Panc1 (cell line): ENCODE measurements at regions of chr16 and their contacts with region 1.

Region 1: GRCh38 chr16:11407047-11407982 is 62.1 kb downstream of the RMI2 start:
- DNase-seq: peak; percentile 72
- ATAC-seq: peak; percentile 81
- H3K4me3 ChIP-seq: no peak overlapping the region
- H3K27ac ChIP-seq: no peak overlapping the region
- H3K4me1 ChIP-seq: no peaks in the 10 kb centered on the region
- H3K27me3 ChIP-seq: no peaks in the 10 kb centered on the region
- CTCF ChIP-seq: peak; percentile 85

Region 2: GRCh38 chr16:11094857-11095565 is 312.3 kb before region 1 on chr16:
- CTCF ChIA-PET with region 1: interaction called, 18 read pairs
- POLR2A ChIA-PET with region 1: no interaction called
- in situ Hi-C with region 1: no loop called
- intact Hi-C with region 1: no loop called
- DNase-seq: no peak
- ATAC-seq: no peak
- H3K4me3 ChIP-seq: no peak overlapping the region
- H3K27ac ChIP-seq: no peak overlapping the region
- H3K4me1 ChIP-seq: 0 out of 2 replicates have a peak, but pooled peaks cover 5% of the 10 kb centered on the region
- H3K27me3 ChIP-seq: no peaks in the 10 kb centered on the region
- CTCF ChIP-seq: no peak

Region 3: GRCh38 chr16:11205754-11206581 is 201.3 kb before region 1 on chr16:
- CTCF ChIA-PET with region 1: no interaction called
- POLR2A ChIA-PET with region 1: no interaction called
- in situ Hi-C with region 1: no loop called
- intact Hi-C with region 1: no loop called
- DNase-seq: no peak
- ATAC-seq: no peak; the same call in 1 of the 2 replicates
- H3K4me3 ChIP-seq: no peak overlapping the region
- H3K27ac ChIP-seq: no peak overlapping the region
- H3K4me1 ChIP-seq: peaks cover 22% of the 10 kb centered on the region
- H3K27me3 ChIP-seq: no peaks in the 10 kb centered on the region
- CTCF ChIP-seq: no peak

Region 4: GRCh38 chr16:11535471-11535870 is 128.2 kb after region 1 on chr16:
- CTCF ChIA-PET with region 1: interaction called, 3 read pairs
- POLR2A ChIA-PET with region 1: no interaction called
- in situ Hi-C with region 1: no loop called
- intact Hi-C with region 1: loop called (anchors 5 kb)
- DNase-seq: no peak
- ATAC-seq: no peak
- H3K4me3 ChIP-seq: no peak overlapping the region
- H3K27ac ChIP-seq: no peak overlapping the region
- H3K4me1 ChIP-seq: no peaks in the 10 kb centered on the region
- H3K27me3 ChIP-seq: no peaks in the 10 kb centered on the region
- CTCF ChIP-seq: no peak

Region 5: DNA sequence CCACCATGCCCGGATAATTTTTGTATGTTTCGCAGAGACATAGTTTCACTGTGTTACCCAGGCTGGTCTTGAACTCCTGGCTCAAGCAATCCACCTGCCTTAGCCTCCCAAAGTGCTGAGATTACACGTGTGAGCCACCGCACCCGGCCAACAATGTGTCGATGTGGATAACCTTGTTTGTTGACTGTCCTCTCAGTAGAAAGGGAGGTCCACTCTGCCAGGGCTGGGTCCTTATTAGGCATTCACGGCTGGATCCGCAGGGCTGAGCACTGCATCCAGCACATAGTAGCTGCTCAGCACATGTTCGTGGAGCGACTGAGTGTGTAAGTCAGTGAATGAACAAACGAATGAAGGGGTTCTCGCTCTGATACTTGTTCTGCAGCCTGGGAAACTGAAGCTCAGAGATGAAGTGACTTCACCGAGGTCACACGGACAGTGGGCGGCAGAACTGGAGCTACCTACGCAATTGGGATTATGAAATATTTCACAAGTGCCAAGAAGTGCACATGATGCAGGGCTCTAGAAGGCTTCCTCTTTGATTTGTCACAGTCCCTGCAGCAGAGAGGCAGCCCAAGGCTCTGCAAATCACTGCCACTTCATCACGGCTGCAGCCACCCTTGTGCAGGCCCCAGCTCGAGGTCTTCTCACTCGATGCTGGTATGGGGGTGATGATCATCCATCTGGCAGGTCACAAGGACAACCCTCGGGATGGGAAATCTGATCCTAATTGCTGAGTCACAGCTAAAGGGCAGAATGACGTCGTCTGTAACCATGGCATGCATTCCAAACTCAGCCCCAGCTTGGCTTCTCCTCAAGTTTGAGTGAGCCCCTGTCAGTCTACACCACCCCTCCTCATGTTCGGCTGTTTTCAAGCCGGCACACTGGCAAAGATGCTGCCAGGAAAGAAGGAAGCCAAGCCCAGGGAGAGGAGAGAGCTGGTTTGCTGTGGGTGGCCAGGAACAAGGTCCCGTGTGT is 232.9 kb after region 1 on chr16:
- CTCF ChIA-PET with region 1: interaction called, 4 read pairs
- POLR2A ChIA-PET with region 1: no interaction called
- in situ Hi-C with region 1: no loop called
- intact Hi-C with region 1: loop called (anchors 5 kb)
- DNase-seq: peak; percentile 93
- ATAC-seq: peak; percentile 67
- H3K4me3 ChIP-seq: no peak overlapping the region
- H3K27ac ChIP-seq: no peak overlapping the region; the same call in 1 of the 2 replicates
- H3K4me1 ChIP-seq: peaks cover 11% of the 10 kb centered on the region
- H3K27me3 ChIP-seq: no peaks in the 10 kb centered on the region
- CTCF ChIP-seq: no peak

Region 6: DNA sequence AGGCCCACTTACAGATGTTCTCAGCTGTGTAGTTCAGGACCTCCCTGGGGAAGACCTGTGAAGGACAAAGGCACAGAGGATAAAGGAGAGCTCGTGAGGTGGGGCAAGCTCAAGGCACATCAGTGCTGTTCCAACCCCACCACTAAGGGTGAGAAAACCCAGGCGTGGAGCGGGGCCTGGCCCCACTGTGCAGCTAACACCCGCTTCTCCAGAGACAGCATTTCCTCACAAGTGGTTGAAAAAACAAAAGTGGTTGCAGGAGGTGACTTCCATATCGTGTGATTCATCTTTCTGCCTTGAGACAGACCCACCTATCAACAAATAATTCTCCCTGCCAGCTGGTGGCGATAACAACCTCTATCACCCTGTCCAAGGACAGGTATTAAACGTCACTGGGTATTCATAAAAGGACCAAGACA is 291.0 kb after region 1 on chr16:
- CTCF ChIA-PET with region 1: interaction called, 10 read pairs
- POLR2A ChIA-PET with region 1: no interaction called
- in situ Hi-C with region 1: no loop called
- intact Hi-C with region 1: no loop called
- DNase-seq: no peak
- ATAC-seq: no peak
- H3K4me3 ChIP-seq: no peak overlapping the region
- H3K27ac ChIP-seq: no peak overlapping the region
- H3K4me1 ChIP-seq: no peaks in the 10 kb centered on the region
- H3K27me3 ChIP-seq: no peaks in the 10 kb centered on the region
- CTCF ChIP-seq: no peak